ENCODE measurements at regions of chr4 and their contacts with region 1.

Region 1: DNA sequence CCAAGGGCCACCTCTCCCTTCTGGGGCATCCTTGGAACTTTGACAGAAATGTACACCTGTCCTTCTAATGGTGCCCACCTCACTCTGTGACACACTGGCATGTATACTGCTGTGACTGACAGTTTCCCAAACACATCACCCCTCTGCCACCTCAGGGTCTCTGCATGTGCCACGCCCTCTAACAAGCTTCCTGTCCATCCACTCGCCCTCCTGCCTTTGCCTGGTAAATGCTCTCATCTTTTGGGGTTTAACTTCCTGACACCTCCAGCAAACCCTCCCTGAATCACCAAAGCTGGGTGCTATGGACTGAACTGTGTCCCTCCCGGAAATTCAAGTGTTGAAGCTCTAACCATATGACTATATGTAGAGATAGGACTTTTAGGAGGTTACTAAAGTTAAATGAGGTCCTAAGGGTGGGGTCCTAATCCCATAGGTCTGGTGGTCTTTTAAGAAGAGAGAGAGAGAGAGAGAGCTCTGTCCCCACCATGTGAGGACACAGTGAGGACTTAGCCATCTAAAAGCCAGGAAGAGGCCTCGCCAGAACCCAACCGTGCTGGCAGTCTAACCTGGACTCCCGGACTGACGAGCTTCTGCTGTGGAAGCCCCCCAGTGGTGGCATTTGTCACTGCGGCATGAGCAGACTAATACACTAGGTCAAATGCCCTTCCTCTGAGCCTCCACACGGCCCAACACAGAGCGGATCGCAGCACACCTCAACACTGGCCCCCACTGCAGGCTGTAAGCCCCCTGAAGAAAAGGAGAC is 95.6 kb downstream of the AFAP1 start:
- DNase-seq: peak; percentile 89
- ATAC-seq: peak; percentile 59
- H3K4me3 ChIP-seq: no peak overlapping the region
- H3K27ac ChIP-seq: peak overlapping the region; percentile 99
- H3K4me1 ChIP-seq: peaks cover 37% of the 10 kb centered on the region
- H3K27me3 ChIP-seq: no peaks in the 10 kb centered on the region
- CTCF ChIP-seq: peak; percentile 68
- POLR2A ChIP-seq: peak; percentile 43; the same call in 1 of the 2 replicates
- RAD21 ChIP-seq: peak; percentile 65

Region 2: GRCh38 chr4:7802093-7802726 is 41.8 kb before region 1 on chr4:
- CTCF ChIA-PET with region 1: interaction called, 10 read pairs
- POLR2A ChIA-PET with region 1: no interaction called
- dilution Hi-C with region 1: no loop called
- in situ Hi-C with region 1: no loop called
- intact Hi-C with region 1: loop called (anchors 1 kb)
- DNase-seq: peak; percentile 85
- ATAC-seq: peak; percentile 84
- H3K4me3 ChIP-seq: no peak overlapping the region
- H3K27ac ChIP-seq: no peak overlapping the region
- H3K4me1 ChIP-seq: peaks cover 23% of the 10 kb centered on the region
- H3K27me3 ChIP-seq: no peaks in the 10 kb centered on the region
- CTCF ChIP-seq: peak; percentile 79
- POLR2A ChIP-seq: no peak
- RAD21 ChIP-seq: peak; percentile 67

Region 3: DNA sequence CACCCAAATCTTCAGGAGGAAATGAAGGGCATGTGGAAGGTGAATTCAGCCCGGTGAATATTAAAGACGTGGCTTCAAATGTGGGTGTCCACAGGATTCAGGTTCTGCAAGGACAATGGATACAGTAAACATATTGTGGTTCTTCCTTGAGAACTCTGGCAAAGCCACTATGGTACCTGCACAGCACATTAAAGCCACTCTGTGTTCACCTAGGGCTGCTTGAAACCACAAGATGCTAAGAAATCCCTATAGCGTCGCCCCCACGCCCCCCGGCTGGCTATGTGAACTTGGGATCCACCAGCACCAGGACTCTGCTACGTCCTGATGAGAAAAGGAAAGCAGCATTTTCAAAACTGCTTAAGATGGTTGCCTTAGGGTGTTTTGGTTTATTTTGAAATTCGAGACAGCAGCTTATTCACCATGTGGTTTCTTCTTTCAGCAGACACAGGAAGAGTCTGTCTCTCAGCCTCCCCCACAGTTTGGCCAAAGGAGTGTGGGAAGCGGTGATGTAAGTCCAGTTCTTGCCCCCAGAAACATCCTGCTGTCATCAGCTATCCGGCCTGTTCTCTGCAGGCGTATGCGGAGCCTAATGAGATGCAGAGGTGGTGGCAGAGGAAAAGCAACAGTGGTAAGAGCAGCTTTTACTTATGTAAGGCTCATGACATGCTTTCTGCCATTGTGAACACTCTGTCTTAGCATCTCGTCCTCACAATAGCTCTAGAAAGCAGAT is 15.9 kb before region 1 on chr4:
- CTCF ChIA-PET with region 1: interaction called, 3 read pairs
- POLR2A ChIA-PET with region 1: interaction called, 4 read pairs
- dilution Hi-C with region 1: no loop called
- in situ Hi-C with region 1: no loop called
- intact Hi-C with region 1: loop called (anchors 2 kb)
- DNase-seq: peak; percentile 100
- ATAC-seq: peak; percentile 87
- H3K4me3 ChIP-seq: no peak overlapping the region
- H3K27ac ChIP-seq: peak overlapping the region; percentile 79
- H3K4me1 ChIP-seq: peaks cover 34% of the 10 kb centered on the region
- H3K27me3 ChIP-seq: no peaks in the 10 kb centered on the region
- CTCF ChIP-seq: no peak
- POLR2A ChIP-seq: peak; percentile 59; the same call in 1 of the 2 replicates
- RAD21 ChIP-seq: peak; percentile 1; the same call in 1 of the 2 replicates

Region 4: DNA sequence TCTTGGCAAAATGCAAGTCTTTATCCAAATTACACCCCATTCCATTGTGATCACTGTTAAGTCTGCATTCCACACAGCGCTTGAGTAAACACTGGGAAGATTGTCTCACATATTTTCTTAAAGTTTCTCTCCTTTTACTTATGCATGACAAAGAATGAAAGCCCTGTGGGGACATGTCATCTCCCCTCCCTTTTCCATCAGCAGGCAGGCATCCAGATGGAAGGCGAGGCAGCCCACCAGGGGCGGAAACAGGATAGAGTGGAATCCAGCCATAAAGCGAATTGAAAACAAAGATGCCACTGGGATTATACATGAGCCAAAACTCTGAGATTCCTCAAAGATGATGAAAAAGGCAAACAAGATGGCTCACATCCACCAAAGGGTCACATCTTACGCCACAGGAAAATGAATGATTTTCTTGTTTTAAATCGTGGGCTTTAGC is 17.4 kb after region 1 on chr4:
- CTCF ChIA-PET with region 1: interaction called, 3 read pairs
- POLR2A ChIA-PET with region 1: interaction called, 3 read pairs
- dilution Hi-C with region 1: no loop called
- in situ Hi-C with region 1: no loop called
- intact Hi-C with region 1: loop called (anchors 1 kb)
- DNase-seq: peak; percentile 97
- ATAC-seq: peak; percentile 68
- H3K4me3 ChIP-seq: no peak overlapping the region
- H3K27ac ChIP-seq: peak overlapping the region; percentile 95
- H3K4me1 ChIP-seq: peaks cover 38% of the 10 kb centered on the region
- H3K27me3 ChIP-seq: no peaks in the 10 kb centered on the region
- CTCF ChIP-seq: no peak
- POLR2A ChIP-seq: no peak
- RAD21 ChIP-seq: peak; percentile 26; the same call in 1 of the 2 replicates

Region 5: DNA sequence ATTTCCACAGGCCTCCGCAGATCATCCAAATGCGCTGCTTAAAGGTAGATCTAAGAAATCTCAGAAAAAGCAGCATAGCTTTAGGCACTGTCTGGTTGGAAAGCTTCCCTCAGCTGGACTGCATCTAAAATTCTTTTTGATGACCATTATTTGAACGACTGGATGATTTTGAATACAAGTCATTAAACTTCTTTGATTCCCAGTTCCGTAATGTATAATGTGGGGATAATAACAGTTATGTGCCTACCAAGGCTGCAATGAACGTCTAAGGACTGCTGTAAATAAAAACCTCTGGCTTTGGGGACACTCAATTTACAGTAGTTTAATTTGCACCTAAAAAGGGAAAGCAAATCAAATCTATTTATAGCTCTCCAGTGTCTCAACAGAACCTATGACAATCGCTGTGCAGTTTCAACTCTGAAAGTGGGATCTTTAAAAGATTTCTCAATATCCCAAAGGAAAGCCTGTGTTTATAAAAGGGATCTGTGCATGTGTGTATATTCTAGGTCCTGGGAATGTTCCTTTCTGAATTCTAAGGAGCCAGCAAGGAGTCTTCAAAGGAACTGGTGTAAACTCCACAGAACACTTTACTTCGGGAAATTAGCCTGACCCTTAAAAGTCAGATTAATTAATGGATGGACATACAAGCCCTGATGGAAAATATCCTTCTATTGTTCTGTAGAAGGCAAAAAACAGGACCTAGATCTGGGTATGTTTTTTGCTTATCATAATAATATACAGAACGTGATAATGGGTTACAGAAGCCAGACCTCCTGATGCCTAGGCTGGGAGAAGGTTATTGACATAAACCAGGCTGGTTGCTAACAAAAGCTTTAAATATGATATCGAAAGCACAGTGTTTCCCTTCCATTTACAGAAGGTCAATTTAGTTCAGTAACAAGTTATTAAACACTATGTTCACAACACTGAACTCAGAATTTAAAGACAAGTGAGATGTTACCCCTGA is 42.3 kb after region 1 on chr4:
- CTCF ChIA-PET with region 1: no interaction called
- POLR2A ChIA-PET with region 1: no interaction called
- dilution Hi-C with region 1: no loop called
- in situ Hi-C with region 1: no loop called
- intact Hi-C with region 1: no loop called
- DNase-seq: peak; percentile 62
- ATAC-seq: 0 out of 2 replicates have a peak, but pooled peaks have one; percentile 4
- H3K4me3 ChIP-seq: no peak overlapping the region
- H3K27ac ChIP-seq: peak overlapping the region; percentile 2; the same call in 1 of the 2 replicates
- H3K4me1 ChIP-seq: peaks cover 24% of the 10 kb centered on the region
- H3K27me3 ChIP-seq: no peaks in the 10 kb centered on the region
- CTCF ChIP-seq: no peak
- POLR2A ChIP-seq: no peak
- RAD21 ChIP-seq: no peak

Region 6: DNA sequence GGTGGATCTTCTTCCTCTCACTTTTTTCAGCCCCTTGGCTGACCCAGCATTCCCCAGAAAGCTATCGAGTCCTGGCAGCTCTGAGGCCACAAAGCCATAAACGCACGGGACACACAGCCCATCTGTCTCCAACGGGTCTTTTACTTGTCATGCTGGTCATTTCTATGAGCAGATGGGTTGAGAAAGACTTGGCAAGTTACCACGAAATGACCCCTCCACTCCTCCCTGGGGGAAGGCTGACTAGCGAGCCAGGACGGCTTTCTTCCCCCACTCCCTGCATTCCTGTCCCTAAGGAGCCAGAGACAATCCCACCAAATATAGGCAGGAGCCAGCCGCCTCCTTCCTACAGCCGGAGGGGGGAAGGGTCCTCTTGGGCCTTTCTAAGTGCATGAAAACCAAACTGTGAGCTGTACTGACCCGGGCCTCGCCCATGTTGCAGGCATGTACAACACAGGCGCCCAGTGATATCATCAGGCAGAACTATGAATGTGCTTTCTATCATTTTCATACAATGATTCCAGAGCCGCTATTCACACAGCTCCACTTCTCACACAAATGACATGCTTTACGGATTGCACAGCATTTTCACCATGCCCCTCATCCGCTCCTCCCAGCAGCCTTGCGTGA is 67.1 kb after region 1 on chr4:
- CTCF ChIA-PET with region 1: no interaction called
- POLR2A ChIA-PET with region 1: no interaction called
- dilution Hi-C with region 1: no loop called
- in situ Hi-C with region 1: no loop called
- intact Hi-C with region 1: loop called (anchors 2 kb)
- DNase-seq: peak; percentile 95
- ATAC-seq: peak; percentile 87
- H3K4me3 ChIP-seq: no peak overlapping the region; the same call in 1 of the 2 replicates
- H3K27ac ChIP-seq: peak overlapping the region; percentile 95
- H3K4me1 ChIP-seq: peaks cover 34% of the 10 kb centered on the region
- H3K27me3 ChIP-seq: no peaks in the 10 kb centered on the region
- CTCF ChIP-seq: no peak
- POLR2A ChIP-seq: 0 out of 2 replicates have a peak, but pooled peaks have one; percentile 37
- RAD21 ChIP-seq: no peak; the same call in 1 of the 2 replicates

Measured in IMR-90 (cell line).